Mammary epithelial cell (primary cell): ENCODE measurements at regions of chr15 and their contacts with region 1.

Region 1: GRCh38 chr15:68875377-68876116 is 54.8 kb upstream of the SPESP1 start:
- DNase-seq: peak; percentile 73
- H3K4me3 ChIP-seq: peak overlapping the region; percentile 9 to 26 (median 10)
- H3K27ac ChIP-seq: no peak overlapping the region
- H3K4me1 ChIP-seq: peaks cover 5% of the 10 kb centered on the region
- H3K27me3 ChIP-seq: no peaks in the 10 kb centered on the region
- CTCF ChIP-seq: peak; percentile 86 to 90

Region 2: GRCh38 chr15:68550481-68551295 is 324.9 kb before region 1 on chr15:
- CTCF ChIA-PET with region 1: no interaction called
- dilution Hi-C with region 1: no loop called
- in situ Hi-C with region 1: loop called (anchors 5 to 10 kb)
- intact Hi-C with region 1: loop called (anchors 1 kb)
- DNase-seq: peak; percentile 37
- H3K4me3 ChIP-seq: no peak overlapping the region
- H3K27ac ChIP-seq: no peak overlapping the region
- H3K4me1 ChIP-seq: no peaks in the 10 kb centered on the region
- H3K27me3 ChIP-seq: no peaks in the 10 kb centered on the region
- CTCF ChIP-seq: peak; percentile 82 to 89

Region 3: GRCh38 chr15:68672781-68673205 is 202.8 kb before region 1 on chr15:
- CTCF ChIA-PET with region 1: interaction called, 3 read pairs
- dilution Hi-C with region 1: no loop called
- in situ Hi-C with region 1: no loop called
- intact Hi-C with region 1: loop called (anchors 1 kb)
- DNase-seq: no peak
- H3K4me3 ChIP-seq: no peak overlapping the region
- H3K27ac ChIP-seq: no peak overlapping the region
- H3K4me1 ChIP-seq: peaks cover 14% of the 10 kb centered on the region
- H3K27me3 ChIP-seq: no peaks in the 10 kb centered on the region
- CTCF ChIP-seq: peak; percentile 22 to 36

Region 4: DNA sequence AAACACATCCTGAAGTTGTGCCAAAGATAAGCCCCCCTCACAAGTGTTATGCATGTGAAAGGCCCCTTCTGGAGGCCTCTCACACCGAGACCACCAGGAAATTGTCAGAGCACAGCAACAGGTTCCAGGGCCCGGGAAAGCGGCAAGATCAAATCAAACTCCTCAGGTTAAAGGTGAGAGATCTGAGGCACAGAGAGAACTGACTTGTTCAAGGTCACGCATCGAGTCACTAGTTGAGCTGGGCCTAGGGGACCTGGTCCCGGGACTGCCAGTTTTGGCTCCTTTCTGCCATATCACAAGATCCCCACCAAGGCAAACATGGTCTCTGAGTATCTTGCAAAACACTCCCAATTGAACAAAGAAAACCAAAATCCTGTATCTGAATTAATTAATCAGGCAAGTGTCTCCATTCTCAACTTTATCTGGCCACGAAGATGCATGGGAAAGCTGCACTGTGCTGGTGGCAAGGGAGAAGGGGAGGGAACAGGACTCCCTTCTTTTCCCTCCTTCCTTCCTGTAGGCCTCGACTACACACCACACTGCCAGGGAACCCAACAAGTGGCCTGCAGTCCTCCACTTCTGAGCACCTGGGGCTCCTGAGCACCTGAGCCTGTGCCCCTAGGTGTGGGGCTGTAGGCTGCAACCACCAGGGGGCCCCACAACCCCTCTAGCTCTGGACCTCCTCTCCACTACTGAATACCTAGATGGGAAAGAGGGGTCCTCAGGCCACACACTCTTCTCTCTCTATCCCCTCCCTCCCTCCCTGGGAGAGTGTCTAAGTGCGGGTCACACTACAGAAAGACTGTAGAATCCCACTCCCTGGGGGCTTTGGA is 92.1 kb before region 1 on chr15:
- CTCF ChIA-PET with region 1: interaction called, 3 read pairs
- dilution Hi-C with region 1: no loop called
- in situ Hi-C with region 1: loop called in 1 of 2 experiments (anchors 10 kb)
- intact Hi-C with region 1: loop called (anchors 1 kb)
- DNase-seq: peak; percentile 27
- H3K4me3 ChIP-seq: no peak overlapping the region
- H3K27ac ChIP-seq: no peak overlapping the region
- H3K4me1 ChIP-seq: peaks cover 19% of the 10 kb centered on the region
- H3K27me3 ChIP-seq: no peaks in the 10 kb centered on the region
- CTCF ChIP-seq: peak; percentile 56 to 81

Region 5: DNA sequence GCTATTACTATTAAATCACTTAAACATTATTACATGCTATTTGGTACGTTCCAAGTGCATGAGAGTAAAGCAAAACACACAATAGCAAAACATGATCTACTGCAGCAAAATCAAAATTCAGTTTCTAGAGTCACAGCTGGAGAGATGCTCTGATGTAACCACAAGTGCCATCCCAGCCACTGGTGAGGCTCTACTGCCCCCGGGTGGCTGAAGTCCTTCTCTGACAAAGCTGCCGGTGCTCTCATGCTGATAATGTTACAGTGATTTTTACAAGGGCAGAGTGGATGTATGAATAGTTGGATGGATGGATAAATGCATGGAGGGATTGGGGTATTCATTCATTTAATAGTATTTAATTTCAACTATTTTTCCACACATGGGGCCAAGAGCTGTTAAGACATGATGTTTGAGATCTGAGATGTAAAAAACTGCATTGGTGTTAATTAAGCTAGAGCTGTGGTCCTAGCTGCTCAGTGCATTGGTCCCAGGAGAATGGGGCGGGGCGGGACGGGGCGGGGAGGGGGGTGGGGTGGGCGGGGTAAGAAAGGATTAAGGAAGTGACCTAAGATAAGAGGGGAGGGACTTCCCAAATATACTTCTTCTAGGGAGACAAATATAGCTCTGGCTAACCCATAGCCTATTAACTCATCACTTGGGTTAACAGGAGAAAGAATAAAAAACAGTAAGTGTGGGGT is 49.5 kb after region 1 on chr15:
- CTCF ChIA-PET with region 1: interaction called, 11 read pairs
- dilution Hi-C with region 1: no loop called
- in situ Hi-C with region 1: no loop called
- intact Hi-C with region 1: loop called (anchors 2 kb)
- DNase-seq: peak; percentile 68
- H3K4me3 ChIP-seq: no peak overlapping the region
- H3K27ac ChIP-seq: no peak overlapping the region
- H3K4me1 ChIP-seq: no peaks in the 10 kb centered on the region
- H3K27me3 ChIP-seq: no peaks in the 10 kb centered on the region
- CTCF ChIP-seq: peak; percentile 92 to 97